A673 (cell line): ENCODE measurements at regions of chrX and their contacts with region 1.

Region 1: GRCh38 chrX:139759637-139760036 is 51.7 kb upstream of the MCF2 start:
- DNase-seq: peak; percentile 68
- H3K4me3 ChIP-seq: no peak overlapping the region
- H3K27ac ChIP-seq: peak overlapping the region; percentile 41
- H3K4me1 ChIP-seq: peaks cover 11% of the 10 kb centered on the region
- H3K27me3 ChIP-seq: no peaks in the 10 kb centered on the region
- CTCF ChIP-seq: peak; percentile 74

Region 2: DNA sequence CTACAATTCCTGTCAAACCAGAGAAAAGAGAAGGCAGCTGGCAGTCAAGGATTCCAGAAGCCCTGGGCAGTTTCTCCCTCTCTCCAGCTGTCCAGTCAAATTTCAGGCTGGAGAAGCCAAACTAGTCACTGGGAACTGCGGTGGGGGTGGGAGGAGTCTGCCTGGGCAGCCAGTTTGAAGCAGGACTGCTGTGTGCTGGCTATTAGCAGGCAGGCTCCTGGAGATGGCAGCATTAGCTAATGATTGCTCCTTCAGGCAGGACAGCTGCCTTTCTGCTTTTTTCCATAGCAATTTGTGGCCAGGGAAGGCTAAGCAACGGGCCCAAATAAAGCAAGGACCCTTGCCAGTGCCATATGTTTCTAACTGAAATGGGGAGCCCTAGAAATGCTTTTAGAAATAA is 1003.4 kb before region 1 on chrX:
- CTCF ChIA-PET with region 1: interaction called, 3 read pairs
- POLR2A ChIA-PET with region 1: no interaction called
- intact Hi-C with region 1: loop called (anchors 5 kb)
- DNase-seq: peak; percentile 76
- H3K4me3 ChIP-seq: no peak overlapping the region
- H3K27ac ChIP-seq: no peak overlapping the region
- H3K4me1 ChIP-seq: peaks cover 5% of the 10 kb centered on the region
- H3K27me3 ChIP-seq: no peaks in the 10 kb centered on the region
- CTCF ChIP-seq: peak; percentile 64

Region 3: DNA sequence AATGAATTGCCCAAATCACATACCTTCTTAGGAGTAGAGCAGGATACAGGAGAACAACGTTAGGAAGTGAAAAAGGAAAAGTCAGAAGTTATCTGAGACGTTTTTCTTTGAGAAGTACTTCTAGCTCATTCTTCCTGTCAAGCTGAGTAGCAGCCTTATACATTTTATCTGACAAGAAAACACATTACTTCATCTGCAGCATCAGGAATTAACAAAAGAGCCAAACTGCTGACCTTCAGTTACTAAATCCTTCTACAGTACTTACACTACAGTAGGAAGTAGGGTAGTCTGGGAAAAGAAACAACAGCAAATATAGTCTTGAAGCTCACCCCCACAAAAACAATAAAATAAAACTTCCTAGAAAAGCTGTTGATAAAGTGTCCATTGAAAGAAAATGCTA is 116.2 kb after region 1 on chrX:
- CTCF ChIA-PET with region 1: no interaction called
- POLR2A ChIA-PET with region 1: no interaction called
- intact Hi-C with region 1: no loop called
- DNase-seq: no peak
- H3K4me3 ChIP-seq: no peak overlapping the region
- H3K27ac ChIP-seq: peak overlapping the region; percentile 19
- H3K4me1 ChIP-seq: peaks cover 38% of the 10 kb centered on the region
- H3K27me3 ChIP-seq: no peaks in the 10 kb centered on the region
- CTCF ChIP-seq: no peak